ENCODE measurements at regions of chr18 and their contacts with region 1.

Region 1: GRCh38 chr18:25786758-25787157 is 303.7 kb downstream of the SS18 start:
- DNase-seq: no peak
- H3K4me3 ChIP-seq: no peak overlapping the region
- H3K27ac ChIP-seq: no peak overlapping the region
- H3K27me3 ChIP-seq: no peaks in the 10 kb centered on the region
- CTCF ChIP-seq: no peak

Region 2: DNA sequence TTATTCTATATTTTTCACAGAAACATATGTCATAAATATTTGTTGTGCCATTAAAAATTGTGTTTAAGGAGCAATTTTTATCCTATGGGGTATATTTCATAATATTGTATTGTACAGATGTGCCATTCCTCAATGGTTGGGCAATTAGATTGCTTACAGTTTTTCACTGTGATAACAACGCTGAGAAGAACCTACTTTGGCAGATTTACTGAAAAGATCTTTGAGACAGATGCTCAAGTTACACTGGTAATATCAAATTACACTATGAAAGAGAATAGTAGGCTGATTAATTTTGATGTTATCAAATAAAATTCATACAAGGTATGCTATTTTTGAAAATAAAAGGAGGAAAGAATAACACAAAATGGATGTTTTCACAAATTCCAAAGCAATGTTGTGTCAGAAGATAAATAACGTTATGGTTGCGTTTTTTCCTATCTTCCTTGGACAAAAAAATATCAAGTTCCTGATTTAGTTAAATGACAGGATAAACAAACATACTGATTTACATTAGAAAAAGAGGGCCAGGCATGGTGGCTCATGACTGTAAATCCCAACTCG is 99.7 kb before region 1 on chr18:
- intact Hi-C with region 1: no loop called
- DNase-seq: no peak
- H3K4me3 ChIP-seq: no peak overlapping the region
- H3K27ac ChIP-seq: no peak overlapping the region
- H3K27me3 ChIP-seq: no peaks in the 10 kb centered on the region
- CTCF ChIP-seq: no peak

Region 3: GRCh38 chr18:25843791-25844190 is 57.0 kb after region 1 on chr18:
- intact Hi-C with region 1: loop called in 1 of 2 experiments (anchors 10 kb)
- DNase-seq: no peak
- H3K4me3 ChIP-seq: no peak overlapping the region
- H3K27ac ChIP-seq: no peak overlapping the region
- H3K27me3 ChIP-seq: no peaks in the 10 kb centered on the region
- CTCF ChIP-seq: no peak

Region 4: GRCh38 chr18:25953126-25953525 is 166.4 kb after region 1 on chr18:
- intact Hi-C with region 1: no loop called
- DNase-seq: no peak
- H3K4me3 ChIP-seq: no peak overlapping the region
- H3K27ac ChIP-seq: no peak overlapping the region
- H3K27me3 ChIP-seq: no peaks in the 10 kb centered on the region
- CTCF ChIP-seq: no peak

Measured in dorsolateral prefrontal cortex (tissue), 120 donors.